ENCODE measurements at regions of chr10 and their contacts with region 1.

Region 1: DNA sequence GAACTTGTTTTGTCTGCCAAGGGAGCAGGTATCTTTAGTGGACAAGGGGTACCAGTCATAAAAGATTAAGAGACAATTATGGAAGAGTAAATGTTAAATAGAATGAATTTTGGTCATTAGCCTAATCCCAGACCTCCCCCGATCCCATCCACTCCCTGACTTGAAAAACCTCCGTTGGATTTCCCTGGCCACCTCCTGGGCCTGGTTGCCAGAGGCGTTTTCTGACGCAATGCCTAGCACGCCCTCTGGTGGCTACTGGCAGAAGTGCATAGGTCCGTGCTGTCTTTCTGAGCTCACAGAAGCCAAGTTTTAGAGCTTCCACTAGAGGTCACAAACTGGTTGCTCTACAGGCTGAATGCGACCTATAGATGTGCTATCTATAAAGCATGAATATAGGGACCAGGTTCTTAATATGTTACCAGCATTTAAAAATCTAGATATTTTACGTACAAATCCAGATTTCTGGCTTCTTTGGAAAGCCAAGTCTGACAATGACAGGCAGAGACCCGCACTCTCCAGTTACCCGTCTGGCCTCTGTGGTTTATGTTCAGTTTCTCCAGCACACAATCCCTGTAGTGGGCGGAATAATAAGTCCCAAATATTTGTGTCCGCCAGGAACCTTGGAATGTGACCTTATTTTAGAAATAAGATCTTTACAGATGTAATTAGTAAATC is 39.8 kb downstream of the SPOCK2 start:
- DNase-seq: peak; percentile 98
- ATAC-seq: peak; percentile 87
- H3K4me3 Mint-ChIP-seq: no peak overlapping the region
- H3K27ac Mint-ChIP-seq: no peak overlapping the region
- H3K4me1 Mint-ChIP-seq: peaks cover 7% of the 10 kb centered on the region
- H3K27me3 Mint-ChIP-seq: peaks cover 3% of the 10 kb centered on the region; the same call in 1 of the 2 replicates
- CTCF ChIP-seq: peak; percentile 99

Region 2: GRCh38 chr10:71822448-71822763 is 226.2 kb before region 1 on chr10:
- CTCF ChIA-PET with region 1: no interaction called
- POLR2A ChIA-PET with region 1: no interaction called
- DNase-seq: no peak
- ATAC-seq: no peak
- H3K4me3 Mint-ChIP-seq: no peak overlapping the region
- H3K27ac Mint-ChIP-seq: no peak overlapping the region
- H3K4me1 Mint-ChIP-seq: peaks cover 29% of the 10 kb centered on the region
- H3K27me3 Mint-ChIP-seq: no peaks in the 10 kb centered on the region
- CTCF ChIP-seq: no peak

Region 3: GRCh38 chr10:71889388-71889987 is 159.1 kb before region 1 on chr10:
- CTCF ChIA-PET with region 1: interaction called, 49 read pairs
- POLR2A ChIA-PET with region 1: no interaction called
- DNase-seq: no peak
- ATAC-seq: peak; percentile 40
- H3K4me3 Mint-ChIP-seq: peak overlapping the region; percentile 73
- H3K27ac Mint-ChIP-seq: no peak overlapping the region
- H3K4me1 Mint-ChIP-seq: peaks cover 9% of the 10 kb centered on the region
- H3K27me3 Mint-ChIP-seq: peaks cover 44% of the 10 kb centered on the region
- CTCF ChIP-seq: no peak

Region 4: DNA sequence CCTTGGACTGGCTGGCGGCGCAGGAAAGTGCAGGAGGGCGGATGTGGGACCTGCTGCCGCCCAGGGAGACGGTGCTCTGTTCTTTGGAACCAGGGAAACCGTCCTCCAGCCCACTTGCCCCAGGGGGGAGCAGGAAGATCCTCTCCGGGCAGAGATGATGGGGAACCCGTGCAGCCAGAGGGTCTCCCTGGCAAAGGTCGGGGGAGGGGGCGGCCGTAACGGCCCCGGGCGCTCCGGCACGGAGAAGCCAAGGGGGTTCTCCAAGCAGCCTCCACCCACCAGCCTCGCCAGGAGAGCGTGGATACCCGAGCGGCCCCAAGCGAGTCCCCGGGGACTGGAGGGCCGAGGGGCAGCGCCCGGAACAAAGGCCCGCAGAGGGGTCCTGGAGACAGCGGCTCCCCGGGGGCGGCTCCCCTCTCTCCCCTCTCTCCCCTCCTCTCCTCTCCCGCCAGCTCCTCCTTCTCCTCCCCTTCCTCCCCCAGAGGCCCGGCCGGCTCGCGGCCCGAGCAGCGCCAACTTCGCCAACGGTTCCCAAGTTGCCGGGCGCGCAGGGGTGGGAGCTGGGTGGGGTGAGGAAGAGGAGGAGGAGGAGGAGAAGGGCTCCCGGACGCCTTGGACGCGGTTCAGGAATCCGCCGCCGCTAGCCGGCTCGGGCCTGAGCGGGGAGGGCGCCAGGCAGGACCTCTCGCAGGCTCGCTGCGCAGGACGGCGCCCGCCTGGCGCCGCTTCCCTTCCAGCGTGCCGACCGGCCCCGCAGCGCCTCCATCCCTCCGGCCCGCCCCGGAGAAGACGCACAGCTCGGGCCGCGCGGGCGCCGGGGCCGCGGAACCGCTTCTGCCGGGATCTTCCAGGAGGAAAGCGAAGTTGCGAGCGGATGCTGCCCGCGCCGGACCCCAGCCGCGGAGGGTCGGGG is 84.6 kb before region 1 on chr10 and contains the start of gene CHST3:
- CTCF ChIA-PET with region 1: interaction called, 20 read pairs
- POLR2A ChIA-PET with region 1: interaction called, 3 read pairs
- DNase-seq: peak; percentile 66
- ATAC-seq: peak; percentile 61
- H3K4me3 Mint-ChIP-seq: peak within 1 kb of the TSS; percentile 87
- H3K27ac Mint-ChIP-seq: no peak within 1 kb of the TSS
- H3K4me1 Mint-ChIP-seq: peaks cover 32% of the 10 kb centered on the region
- H3K27me3 Mint-ChIP-seq: peaks cover 49% of the 10 kb centered on the region
- CTCF ChIP-seq: no peak
- total RNA-seq, gene CHST3: 5.6 to 7.0 TPM (median 5.9 TPM) in 3 replicates

Region 5: GRCh38 chr10:71999360-72000072 is 49.1 kb before region 1 on chr10:
- CTCF ChIA-PET with region 1: interaction called, 31 read pairs
- POLR2A ChIA-PET with region 1: no interaction called
- DNase-seq: no peak
- ATAC-seq: peak; percentile 55
- H3K4me3 Mint-ChIP-seq: no peak overlapping the region
- H3K27ac Mint-ChIP-seq: 0 out of 2 replicates have a peak overlapping the region, but pooled peaks have one; percentile 84
- H3K4me1 Mint-ChIP-seq: peaks cover 10% of the 10 kb centered on the region
- H3K27me3 Mint-ChIP-seq: no peaks in the 10 kb centered on the region
- CTCF ChIP-seq: no peak

Region 6: GRCh38 chr10:72030762-72031543 is 17.6 kb before region 1 on chr10:
- CTCF ChIA-PET with region 1: interaction called, 20 read pairs
- POLR2A ChIA-PET with region 1: no interaction called
- DNase-seq: no peak
- ATAC-seq: peak; percentile 41; the same call in 1 of the 2 replicates
- H3K4me3 Mint-ChIP-seq: no peak overlapping the region
- H3K27ac Mint-ChIP-seq: no peak overlapping the region
- H3K4me1 Mint-ChIP-seq: no peaks in the 10 kb centered on the region
- H3K27me3 Mint-ChIP-seq: no peaks in the 10 kb centered on the region; the same call in 1 of the 2 replicates
- CTCF ChIP-seq: no peak

Region 7: DNA sequence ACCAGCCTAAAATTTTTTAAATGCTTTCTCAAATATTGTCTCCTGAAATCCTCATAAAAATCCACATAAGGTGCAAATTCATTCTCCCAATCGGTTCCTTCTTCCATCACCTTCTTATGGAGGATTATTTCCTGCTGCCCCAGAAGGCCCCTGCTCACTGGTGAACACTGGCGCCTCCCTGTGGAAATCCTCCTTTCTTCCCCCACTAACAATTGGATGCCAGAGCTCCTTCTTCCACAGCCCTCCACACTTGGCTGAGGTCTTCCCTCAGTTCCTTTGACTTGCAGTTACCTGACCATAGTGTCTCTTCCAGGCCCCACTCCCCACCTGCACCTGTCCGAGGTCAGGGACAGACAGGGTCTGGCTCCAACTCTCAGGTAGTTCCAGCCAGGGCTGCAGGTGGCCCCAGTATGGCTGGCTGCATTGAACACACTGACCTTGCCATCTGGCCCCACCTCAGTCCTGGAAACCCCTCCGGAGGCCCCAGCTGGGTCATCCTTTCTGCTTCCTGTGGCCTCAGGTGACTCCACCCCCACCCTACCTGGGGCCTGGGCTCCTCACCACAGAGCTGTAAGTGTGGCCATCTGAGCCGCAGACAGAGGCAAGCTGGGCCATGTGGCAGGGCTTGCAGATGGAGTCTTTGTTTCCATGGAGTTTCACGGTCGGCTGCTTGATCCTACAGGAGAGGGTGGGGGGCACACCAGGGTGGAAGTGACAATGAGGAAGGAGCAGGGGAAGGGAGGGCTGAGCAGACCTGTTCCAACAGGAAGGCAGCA is 21.4 kb after region 1 on chr10:
- CTCF ChIA-PET with region 1: interaction called, 84 read pairs
- POLR2A ChIA-PET with region 1: no interaction called
- DNase-seq: peak; percentile 60
- ATAC-seq: peak; percentile 49
- H3K4me3 Mint-ChIP-seq: no peak overlapping the region
- H3K27ac Mint-ChIP-seq: no peak overlapping the region
- H3K4me1 Mint-ChIP-seq: peaks cover 5% of the 10 kb centered on the region
- H3K27me3 Mint-ChIP-seq: no peaks in the 10 kb centered on the region
- CTCF ChIP-seq: no peak; the same call in 1 of the 2 replicates

Region 8: GRCh38 chr10:72126184-72126871 is 77.7 kb after region 1 on chr10:
- CTCF ChIA-PET with region 1: interaction called, 11 read pairs
- POLR2A ChIA-PET with region 1: no interaction called
- DNase-seq: no peak
- ATAC-seq: peak; percentile 60; the same call in 1 of the 2 replicates
- H3K4me3 Mint-ChIP-seq: no peak overlapping the region
- H3K27ac Mint-ChIP-seq: peak overlapping the region; percentile 55
- H3K4me1 Mint-ChIP-seq: peaks cover 12% of the 10 kb centered on the region
- H3K27me3 Mint-ChIP-seq: no peaks in the 10 kb centered on the region
- CTCF ChIP-seq: no peak